Activated T-helper 1 cell treated with anti-CD3 and anti-CD28 coated beads, Interleukin-12 subunit alpha, Interleukin-12 subunit beta, Interleukin-2, Interleukin-4 antibody, amounts not matched to agents 30 ng/mL and 10 ng/mL and 1 ng/mL, durations not matched to agents 14 hours and 24 hours and 36 hours (primary cell): ENCODE measurements at regions of chr17 and their contacts with region 1.

Region 1: DNA sequence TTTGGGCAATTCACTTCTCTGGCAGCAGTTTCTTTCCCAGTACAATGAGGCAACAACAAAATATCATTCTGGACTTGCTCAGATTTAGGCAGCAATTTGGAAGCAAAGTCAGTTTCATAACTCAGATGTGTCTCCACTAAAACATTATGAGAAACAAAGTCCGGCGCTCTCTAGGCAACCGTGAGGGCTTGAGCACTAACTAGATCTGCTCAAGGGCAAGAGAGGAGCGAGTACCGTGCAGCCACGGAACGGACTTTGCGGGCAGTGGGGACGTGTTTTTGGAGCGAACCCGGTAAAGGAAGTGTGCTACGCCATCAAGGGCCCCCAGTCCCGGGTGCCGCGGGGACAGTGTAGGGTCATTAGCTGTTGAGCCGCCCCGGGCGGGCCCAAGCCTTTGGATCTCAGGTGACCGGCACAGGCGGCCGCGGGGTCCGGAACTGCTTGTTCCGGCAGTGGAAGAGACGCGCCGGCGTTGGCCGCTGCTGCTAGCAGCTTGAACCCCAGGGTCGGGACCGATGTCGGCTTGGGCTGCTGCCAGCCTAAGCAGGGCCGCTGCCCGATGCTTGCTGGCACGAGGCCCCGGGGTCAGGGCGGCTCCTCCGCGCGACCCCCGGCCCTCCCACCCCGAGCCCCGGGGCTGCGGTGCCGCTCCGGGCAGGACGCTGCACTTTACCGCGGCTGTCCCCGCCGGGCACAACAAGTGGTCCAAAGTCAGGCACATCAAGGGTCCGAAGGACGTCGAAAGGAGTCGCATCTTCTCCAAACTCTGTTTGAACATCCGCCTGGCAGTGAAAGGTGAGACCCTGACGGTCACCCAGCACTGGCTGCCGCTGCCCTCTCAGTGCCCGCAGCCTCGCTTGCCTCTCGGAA is at the start of gene TACO1:
- DNase-seq: peak; percentile 75
- H3K4me3 Mint-ChIP-seq: peak within 1 kb of the TSS; percentile 99
- H3K27ac Mint-ChIP-seq: peak within 1 kb of the TSS; percentile 94
- H3K4me1 Mint-ChIP-seq: peaks cover 26% of the 10 kb centered on the region
- H3K27me3 Mint-ChIP-seq: no peaks in the 10 kb centered on the region
- total RNA-seq, gene TACO1: 30.8 and 32.0 TPM in 2 replicates

Region 2: GRCh38 chr17:63523253-63523855 is 77.5 kb before region 1 on chr17 and contains the start of gene KCNH6:
- intact Hi-C with region 1: loop called (anchors 1 kb)
- DNase-seq: no peak
- H3K4me3 Mint-ChIP-seq: no peak within 1 kb of the TSS
- H3K27ac Mint-ChIP-seq: no peak within 1 kb of the TSS
- H3K4me1 Mint-ChIP-seq: no peaks in the 10 kb centered on the region
- H3K27me3 Mint-ChIP-seq: peaks cover 25% of the 10 kb centered on the region
- total RNA-seq, gene KCNH6: not detected in 2 replicates

Region 3: DNA sequence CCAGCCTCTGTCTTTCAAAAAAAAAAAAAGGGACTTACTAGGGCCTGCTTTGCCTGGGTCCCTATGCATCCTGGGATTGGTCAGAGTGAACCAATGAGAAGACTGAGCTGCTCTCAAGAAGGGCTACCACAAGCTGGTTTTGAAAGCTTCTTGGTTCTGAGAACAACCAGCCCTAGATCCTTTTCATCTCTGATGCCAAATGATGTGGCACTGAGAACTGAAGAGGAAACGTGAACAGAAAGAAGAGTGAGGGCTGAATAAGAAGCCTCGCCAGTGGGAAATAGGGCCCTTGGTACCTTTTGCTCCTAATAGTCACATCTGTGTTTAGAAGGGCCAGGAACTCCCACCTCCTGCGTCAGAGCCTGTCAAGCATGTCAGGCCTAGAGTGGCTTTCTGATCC is 10.6 kb after region 1 on chr17:
- intact Hi-C with region 1: loop called (anchors 1 kb)
- DNase-seq: peak; percentile 11
- H3K4me3 Mint-ChIP-seq: peak overlapping the region; percentile 77
- H3K27ac Mint-ChIP-seq: peak overlapping the region; percentile 98
- H3K4me1 Mint-ChIP-seq: peaks cover 30% of the 10 kb centered on the region
- H3K27me3 Mint-ChIP-seq: no peaks in the 10 kb centered on the region